HAP-1 (cell line): ENCODE measurements at regions of chr12 and their contacts with region 1.

Region 1: GRCh38 chr12:100545092-100545491 is 28.4 kb upstream of the GAS2L3 start:
- DNase-seq: no peak
- H3K4me3 ChIP-seq: no peak overlapping the region
- H3K4me1 ChIP-seq: no peaks in the 10 kb centered on the region; the same call in 1 of the 2 replicates
- H3K27me3 ChIP-seq: no peaks in the 10 kb centered on the region

Region 2: DNA sequence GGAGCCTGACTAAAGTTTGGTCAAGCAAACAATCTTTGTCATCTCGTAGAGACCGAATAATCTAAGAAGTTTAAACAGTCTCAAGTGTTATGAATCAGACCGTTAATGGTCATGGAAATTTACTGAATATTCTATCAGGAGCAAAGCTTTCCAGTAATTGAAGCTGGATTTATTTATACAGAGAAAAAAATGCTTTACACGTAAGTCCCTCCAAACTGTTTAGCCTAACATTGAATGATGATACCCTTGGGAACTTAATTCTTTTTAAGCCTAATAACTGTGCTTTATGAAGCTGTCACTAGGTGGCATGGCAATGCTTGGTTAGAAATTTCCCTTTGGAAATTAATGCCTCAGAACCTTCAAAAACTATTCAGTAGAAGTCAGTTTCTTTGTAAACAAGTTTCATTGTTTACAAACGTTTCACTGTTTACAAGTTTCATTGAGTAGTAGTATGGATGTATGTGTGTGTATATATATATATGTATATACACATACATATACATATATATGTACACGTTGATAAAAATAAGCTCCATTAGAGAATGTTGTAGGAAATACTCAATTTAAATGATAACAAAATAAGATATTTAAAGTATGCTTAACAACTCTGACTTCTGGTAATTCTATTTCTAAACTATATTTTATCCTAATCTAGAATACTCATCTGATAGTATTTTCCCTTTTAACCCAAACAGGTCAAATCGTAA is 310.3 kb before region 1 on chr12:
- in situ Hi-C with region 1: loop called (anchors 10 kb)
- DNase-seq: peak; percentile 24 to 71
- H3K4me3 ChIP-seq: no peak overlapping the region
- H3K4me1 ChIP-seq: no peaks in the 10 kb centered on the region
- H3K27me3 ChIP-seq: no peaks in the 10 kb centered on the region

Region 3: GRCh38 chr12:100356644-100357223 is 188.4 kb before region 1 on chr12 and contains the start of gene SLC17A8:
- in situ Hi-C with region 1: loop called (anchors 10 kb)
- DNase-seq: no peak
- H3K4me3 ChIP-seq: no peak within 1 kb of the TSS
- H3K4me1 ChIP-seq: peaks cover 14% of the 10 kb centered on the region
- H3K27me3 ChIP-seq: no peaks in the 10 kb centered on the region

Region 4: DNA sequence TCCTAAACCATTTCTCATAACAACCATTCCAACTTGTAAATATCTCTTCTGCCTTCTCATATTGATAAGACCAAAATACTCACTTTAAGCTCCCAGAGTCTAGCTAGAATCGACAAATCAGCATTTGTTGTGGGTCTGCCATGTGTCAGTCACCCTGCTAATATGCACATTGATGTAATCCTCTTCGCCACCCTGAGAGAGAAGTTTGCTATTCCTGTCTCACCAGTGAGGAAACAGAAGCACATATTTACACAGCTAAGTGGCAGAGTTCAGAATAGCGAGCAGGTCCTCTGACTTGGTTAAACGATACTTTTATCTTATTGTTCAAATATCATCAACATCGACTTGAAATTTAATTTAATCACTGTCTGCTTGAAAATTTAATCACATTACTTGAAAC is 391.6 kb after region 1 on chr12:
- in situ Hi-C with region 1: no loop called
- DNase-seq: no peak
- H3K4me3 ChIP-seq: no peak overlapping the region
- H3K4me1 ChIP-seq: peaks cover under 1% of the 10 kb centered on the region; the same call in 1 of the 2 replicates
- H3K27me3 ChIP-seq: no peaks in the 10 kb centered on the region